Dorsolateral prefrontal cortex (tissue), 120 donors: ENCODE measurements at regions of chr14 and their contacts with region 1.

Region 1: GRCh38 chr14:103808403-103809001 is 38.9 kb downstream of the PPP1R13B start:
- DNase-seq: peak in 9 of 10 donors; percentile 42 to 67 (median 58)
- H3K4me3 ChIP-seq: no peak overlapping the region
- H3K27ac ChIP-seq: no peak overlapping the region
- H3K27me3 ChIP-seq: no peaks in the 10 kb centered on the region
- CTCF ChIP-seq: peak; percentile 57 to 98 (median 85)

Region 2: GRCh38 chr14:103775506-103775905 is 33.0 kb before region 1 on chr14:
- intact Hi-C with region 1: no loop called
- DNase-seq: peak in 1 of 10 donors; percentile 21
- H3K4me3 ChIP-seq: no peak overlapping the region
- H3K27ac ChIP-seq: peak overlapping the region in 4 of 59 donors; percentile 7 to 58 (median 35)
- H3K27me3 ChIP-seq: no peaks in the 10 kb centered on the region
- CTCF ChIP-seq: no peak

Region 3: GRCh38 chr14:103910262-103910935 is 101.9 kb after region 1 on chr14:
- intact Hi-C with region 1: loop called in 1 of 2 experiments (anchors 5 kb)
- DNase-seq: peak; percentile 39 to 93 (median 78)
- H3K4me3 ChIP-seq: peak overlapping the region in 18 of 59 donors; percentile 0 to 32 (median 12)
- H3K27ac ChIP-seq: peak overlapping the region in 28 of 59 donors; percentile 6 to 65 (median 31)
- H3K27me3 ChIP-seq: no peaks in the 10 kb centered on the region
- CTCF ChIP-seq: peak; percentile 45 to 87 (median 78)

Region 4: GRCh38 chr14:103973354-103973753 is 164.9 kb after region 1 on chr14:
- intact Hi-C with region 1: loop called in 1 of 2 experiments (anchors 10 kb)
- DNase-seq: no peak
- H3K4me3 ChIP-seq: no peak overlapping the region
- H3K27ac ChIP-seq: no peak overlapping the region
- H3K27me3 ChIP-seq: peaks cover 0 to 7% (median 0%) of the 10 kb centered on the region in 45 donors
- CTCF ChIP-seq: no peak